ENCODE measurements at regions of chr12 and their contacts with region 1.

Region 1: DNA sequence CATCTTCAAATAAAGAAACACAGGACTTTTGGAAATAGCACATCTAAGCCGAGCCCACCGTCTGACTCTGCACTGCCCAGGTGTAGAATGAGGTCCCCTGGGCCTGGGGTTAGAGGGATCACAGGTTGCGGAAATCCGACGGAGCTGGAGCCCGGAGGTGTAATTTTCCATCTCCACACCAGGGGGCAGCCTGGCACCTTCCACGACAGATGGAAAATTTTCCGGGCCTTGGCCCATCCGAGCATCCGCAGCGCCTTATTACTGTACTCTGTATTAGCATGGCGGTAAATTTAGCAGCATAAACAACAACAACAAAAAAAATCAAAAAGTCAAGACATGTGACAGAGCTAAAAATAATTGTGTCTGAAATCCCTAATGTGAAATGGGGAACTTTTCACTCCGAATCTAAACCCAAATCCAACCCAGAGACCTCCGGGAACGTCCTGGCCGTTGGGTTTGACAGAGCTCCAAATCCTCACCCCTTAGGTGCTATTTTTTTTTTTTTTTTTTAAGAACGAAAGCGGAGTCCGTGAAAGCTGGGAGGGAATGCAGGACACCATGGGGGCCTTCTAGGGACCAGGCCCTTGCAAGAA is 93.9 kb downstream of the KSR2 start:
- DNase-seq: peak; percentile 57 to 90 (median 78)
- ATAC-seq: peak; percentile 85 to 99 (median 94)
- H3K4me3 ChIP-seq: no peak overlapping the region
- H3K27ac ChIP-seq: no peak overlapping the region
- H3K4me1 ChIP-seq: no peaks in the 10 kb centered on the region
- H3K27me3 ChIP-seq: no peaks in the 10 kb centered on the region
- CTCF ChIP-seq: peak; percentile 80 to 91 (median 88)

Region 2: DNA sequence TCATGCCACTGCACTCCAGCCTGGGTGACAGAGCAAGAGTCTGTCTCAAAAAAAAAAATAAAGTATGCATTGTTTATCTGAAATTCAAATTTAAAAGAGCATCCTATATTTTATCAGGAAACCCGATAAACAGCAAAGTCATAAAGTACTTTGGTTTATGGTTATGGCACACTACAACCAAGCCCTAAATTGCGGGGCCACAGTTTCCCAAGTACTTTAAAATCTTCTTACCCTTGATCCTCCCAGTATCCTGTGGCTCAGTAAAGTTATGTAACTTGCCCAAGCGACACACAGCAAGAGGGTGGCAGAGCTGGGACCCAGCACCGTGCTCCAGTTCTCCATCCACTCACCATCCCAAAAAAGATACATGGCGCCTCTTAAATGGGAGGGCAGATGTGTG is 58.6 kb after region 1 on chr12:
- intact Hi-C with region 1: no loop called
- DNase-seq: no peak
- ATAC-seq: no peak
- H3K4me3 ChIP-seq: no peak overlapping the region
- H3K27ac ChIP-seq: no peak overlapping the region
- H3K4me1 ChIP-seq: no peaks in the 10 kb centered on the region
- H3K27me3 ChIP-seq: no peaks in the 10 kb centered on the region
- CTCF ChIP-seq: no peak

Region 3: GRCh38 chr12:118035246-118036041 is 160.5 kb after region 1 on chr12:
- intact Hi-C with region 1: loop called in 1 of 3 experiments (anchors 10 kb)
- DNase-seq: no peak
- ATAC-seq: peak in 1 of 4 donors; percentile 42
- H3K4me3 ChIP-seq: no peak overlapping the region
- H3K27ac ChIP-seq: no peak overlapping the region
- H3K4me1 ChIP-seq: no peaks in the 10 kb centered on the region
- H3K27me3 ChIP-seq: no peaks in the 10 kb centered on the region
- CTCF ChIP-seq: no peak